Activated T-helper 1 cell treated with anti-CD3 and anti-CD28 coated beads, Interleukin-12 subunit alpha, Interleukin-12 subunit beta, Interleukin-2, Interleukin-4 antibody, amounts not matched to agents 30 ng/mL and 10 ng/mL and 1 ng/mL, durations not matched to agents 14 hours and 24 hours and 36 hours (primary cell): ENCODE measurements at regions of chr9 and their contacts with region 1.

Region 1: DNA sequence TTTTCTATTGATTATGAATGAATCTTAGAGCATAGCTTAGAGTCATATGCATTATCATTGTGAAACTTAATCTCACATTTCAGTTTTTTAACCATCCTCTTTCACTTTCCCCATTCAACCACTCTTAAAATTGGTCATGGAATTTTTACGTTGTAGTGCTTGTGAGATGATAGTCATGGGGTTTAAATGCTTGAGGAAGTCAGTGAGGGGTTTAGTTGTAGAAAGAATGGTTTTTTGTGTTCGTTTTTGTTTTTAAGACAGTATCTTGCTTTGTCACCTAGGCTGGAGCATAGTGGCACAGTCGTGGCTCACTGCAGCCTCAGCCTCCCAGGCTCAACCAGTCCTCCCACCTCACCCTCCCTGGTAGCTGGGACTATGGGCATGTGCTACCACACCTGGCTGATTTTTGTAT is 19.6 kb downstream of the UGCG start:
- DNase-seq: no peak
- H3K4me3 Mint-ChIP-seq: peak overlapping the region; percentile 2
- H3K27ac Mint-ChIP-seq: peak overlapping the region; percentile 74
- H3K4me1 Mint-ChIP-seq: peaks cover 54% of the 10 kb centered on the region
- H3K27me3 Mint-ChIP-seq: peaks cover 4% of the 10 kb centered on the region

Region 2: DNA sequence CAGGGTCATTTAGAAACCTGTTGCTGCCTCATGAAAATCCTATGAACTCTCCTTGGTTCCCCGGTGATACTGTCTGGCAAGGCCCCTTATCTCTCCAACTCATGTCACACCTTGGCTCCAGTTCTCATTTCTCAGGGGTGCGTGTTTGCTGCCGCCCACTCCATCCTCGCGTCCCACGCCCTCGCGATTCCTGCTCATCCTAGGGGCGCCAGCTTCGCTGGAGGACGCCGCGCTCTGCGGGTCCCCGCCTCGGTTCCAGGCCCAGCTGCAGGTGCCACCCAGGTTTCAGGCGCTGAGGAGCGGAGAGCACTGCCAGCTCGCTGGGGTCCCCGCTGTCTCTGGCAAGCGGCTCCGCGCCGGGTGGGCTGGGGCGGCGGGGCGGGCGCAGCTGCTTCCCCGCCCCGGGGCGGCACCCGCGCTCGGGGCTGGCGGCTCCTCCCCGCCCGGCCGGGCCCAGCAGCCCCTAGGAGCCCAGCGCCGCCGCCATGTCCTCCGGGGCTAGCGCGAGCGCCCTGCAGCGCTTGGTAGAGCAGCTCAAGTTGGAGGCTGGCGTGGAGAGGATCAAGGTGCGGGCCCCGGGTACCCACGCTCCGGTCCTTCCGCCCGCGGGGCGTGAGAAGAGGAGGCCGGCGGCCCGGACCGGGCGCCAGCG is 255.0 kb before region 1 on chr9 and contains the start of gene GNG10:
- intact Hi-C with region 1: loop called (anchors 5 kb)
- DNase-seq: peak; percentile 66
- H3K4me3 Mint-ChIP-seq: peak within 1 kb of the TSS; percentile 89
- H3K27ac Mint-ChIP-seq: peak within 1 kb of the TSS; percentile 89
- H3K4me1 Mint-ChIP-seq: peaks cover 34% of the 10 kb centered on the region
- H3K27me3 Mint-ChIP-seq: no peaks in the 10 kb centered on the region
- total RNA-seq, gene GNG10: 30.7 and 35.4 TPM in 2 replicates

Region 3: GRCh38 chr9:111926421-111926875 is 10.2 kb after region 1 on chr9:
- intact Hi-C with region 1: loop called (anchors 1 kb)
- DNase-seq: peak; percentile 42
- H3K4me3 Mint-ChIP-seq: no peak overlapping the region
- H3K27ac Mint-ChIP-seq: no peak overlapping the region
- H3K4me1 Mint-ChIP-seq: peaks cover 24% of the 10 kb centered on the region
- H3K27me3 Mint-ChIP-seq: no peaks in the 10 kb centered on the region

Region 4: GRCh38 chr9:111992523-111992922 is 76.3 kb after region 1 on chr9:
- intact Hi-C with region 1: loop called (anchors 1 kb)
- DNase-seq: no peak
- H3K4me3 Mint-ChIP-seq: no peak overlapping the region
- H3K27ac Mint-ChIP-seq: peak overlapping the region; percentile 37
- H3K4me1 Mint-ChIP-seq: peaks cover 26% of the 10 kb centered on the region
- H3K27me3 Mint-ChIP-seq: peaks cover 14% of the 10 kb centered on the region

Region 5: GRCh38 chr9:112061152-112061740 is 145.0 kb after region 1 on chr9:
- intact Hi-C with region 1: loop called (anchors 1 kb)
- DNase-seq: peak; percentile 38
- H3K4me3 Mint-ChIP-seq: no peak overlapping the region
- H3K27ac Mint-ChIP-seq: peak overlapping the region; percentile 4
- H3K4me1 Mint-ChIP-seq: peaks cover 27% of the 10 kb centered on the region
- H3K27me3 Mint-ChIP-seq: no peaks in the 10 kb centered on the region

Region 6: GRCh38 chr9:112379177-112380101 is 463.2 kb after region 1 on chr9:
- intact Hi-C with region 1: loop called (anchors 1 kb)
- DNase-seq: peak; percentile 97
- H3K4me3 Mint-ChIP-seq: peak overlapping the region; percentile 98
- H3K27ac Mint-ChIP-seq: peak overlapping the region; percentile 99
- H3K4me1 Mint-ChIP-seq: peaks cover 52% of the 10 kb centered on the region
- H3K27me3 Mint-ChIP-seq: no peaks in the 10 kb centered on the region